Calu3 (cell line): ENCODE measurements at regions of chr1 and their contacts with region 1.

Region 1: GRCh38 chr1:84936116-84936810 is 43.3 kb upstream of the LPAR3 start:
- DNase-seq: peak; percentile 25
- H3K4me3 Mint-ChIP-seq: no peak overlapping the region
- H3K27ac Mint-ChIP-seq: no peak overlapping the region
- H3K4me1 Mint-ChIP-seq: no peaks in the 10 kb centered on the region
- H3K27me3 Mint-ChIP-seq: no peaks in the 10 kb centered on the region
- CTCF ChIP-seq: peak; percentile 85

Region 2: GRCh38 chr1:84550826-84551225 is 385.4 kb before region 1 on chr1:
- CTCF ChIA-PET with region 1: no interaction called
- intact Hi-C with region 1: loop called (anchors 5 kb)
- DNase-seq: no peak
- H3K4me3 Mint-ChIP-seq: no peak overlapping the region
- H3K27ac Mint-ChIP-seq: no peak overlapping the region
- H3K4me1 Mint-ChIP-seq: no peaks in the 10 kb centered on the region
- H3K27me3 Mint-ChIP-seq: no peaks in the 10 kb centered on the region
- CTCF ChIP-seq: no peak

Region 3: GRCh38 chr1:84668185-84668584 is 268.1 kb before region 1 on chr1:
- CTCF ChIA-PET with region 1: no interaction called
- intact Hi-C with region 1: loop called (anchors 10 kb)
- DNase-seq: no peak
- H3K4me3 Mint-ChIP-seq: no peak overlapping the region
- H3K27ac Mint-ChIP-seq: no peak overlapping the region
- H3K4me1 Mint-ChIP-seq: peaks cover 1% of the 10 kb centered on the region
- H3K27me3 Mint-ChIP-seq: no peaks in the 10 kb centered on the region
- CTCF ChIP-seq: no peak

Region 4: DNA sequence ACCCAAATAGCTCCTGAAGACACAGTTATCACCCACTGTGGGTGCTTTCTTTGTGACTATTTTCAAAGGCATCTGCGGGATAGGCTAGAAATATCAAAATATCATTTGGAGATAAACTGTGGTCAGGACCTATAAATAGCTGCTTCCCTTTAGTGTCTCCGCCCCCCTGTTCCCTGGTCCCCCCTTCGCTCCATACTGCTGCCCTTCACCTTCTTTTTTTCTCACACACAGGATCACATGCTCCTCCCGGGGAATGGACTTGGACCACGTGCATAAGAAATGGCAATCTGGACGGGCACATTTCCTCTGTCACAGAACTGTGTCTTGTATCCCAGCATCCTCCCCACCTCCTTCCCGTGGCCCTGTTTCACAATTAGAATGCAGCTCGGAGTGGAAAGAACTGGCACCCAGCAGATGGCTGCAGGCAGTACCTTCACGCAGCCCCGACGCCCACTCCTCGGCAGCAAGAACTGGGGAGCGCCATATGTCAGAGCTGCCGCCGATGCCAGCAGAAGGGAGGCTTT is 177.2 kb before region 1 on chr1:
- CTCF ChIA-PET with region 1: no interaction called
- intact Hi-C with region 1: loop called (anchors 5 kb)
- DNase-seq: no peak
- H3K4me3 Mint-ChIP-seq: peak overlapping the region; percentile 36
- H3K27ac Mint-ChIP-seq: no peak overlapping the region
- H3K4me1 Mint-ChIP-seq: peaks cover 21% of the 10 kb centered on the region
- H3K27me3 Mint-ChIP-seq: peaks cover 15% of the 10 kb centered on the region
- CTCF ChIP-seq: no peak

Region 5: DNA sequence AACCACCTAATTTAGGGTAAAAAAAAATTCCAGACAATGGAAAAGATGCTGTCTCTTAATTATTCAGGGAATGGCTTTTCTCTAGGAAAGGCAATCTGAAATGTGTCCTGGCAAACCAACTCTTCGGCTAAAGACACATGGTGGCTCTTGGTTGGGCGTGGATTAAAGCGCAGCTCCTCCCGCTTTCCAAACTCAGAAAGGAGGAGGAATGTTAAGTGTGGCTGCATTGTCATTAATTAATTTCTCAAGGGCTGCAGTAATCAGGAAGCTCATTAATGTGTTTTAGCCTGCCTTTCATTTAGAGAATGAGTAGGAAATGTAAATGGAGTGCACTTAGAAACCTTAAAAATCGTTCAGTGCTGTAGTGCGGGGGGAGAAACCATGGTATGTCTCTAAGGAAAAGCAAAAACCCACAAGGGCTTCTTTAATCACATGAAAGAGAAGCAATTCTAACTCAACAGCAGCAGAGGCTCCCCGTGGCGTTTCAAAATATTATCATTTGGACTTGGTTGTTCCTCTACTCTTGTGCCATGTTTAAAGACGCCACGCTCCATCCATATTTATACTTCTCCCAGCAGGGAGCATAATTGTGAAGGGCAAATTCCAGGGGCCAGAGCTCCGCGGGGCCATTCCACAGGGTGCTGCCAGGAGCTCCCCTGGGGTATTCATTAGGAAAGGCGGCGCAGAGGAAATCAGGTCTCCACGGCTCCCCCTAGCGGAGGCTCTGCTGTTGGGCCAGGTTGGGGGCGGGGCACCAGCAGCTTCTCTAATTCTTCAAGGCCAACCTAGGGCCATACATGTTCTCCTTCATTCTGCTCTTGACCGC is 154.1 kb before region 1 on chr1:
- CTCF ChIA-PET with region 1: interaction called, 17 read pairs
- intact Hi-C with region 1: loop called (anchors 1 kb)
- DNase-seq: peak; percentile 92
- H3K4me3 Mint-ChIP-seq: peak overlapping the region; percentile 73
- H3K27ac Mint-ChIP-seq: peak overlapping the region; percentile 45
- H3K4me1 Mint-ChIP-seq: peaks cover 6% of the 10 kb centered on the region
- H3K27me3 Mint-ChIP-seq: no peaks in the 10 kb centered on the region
- CTCF ChIP-seq: peak; percentile 91